T-cell (primary cell): ENCODE measurements at regions of chr14 and their contacts with region 1.

Region 1: DNA sequence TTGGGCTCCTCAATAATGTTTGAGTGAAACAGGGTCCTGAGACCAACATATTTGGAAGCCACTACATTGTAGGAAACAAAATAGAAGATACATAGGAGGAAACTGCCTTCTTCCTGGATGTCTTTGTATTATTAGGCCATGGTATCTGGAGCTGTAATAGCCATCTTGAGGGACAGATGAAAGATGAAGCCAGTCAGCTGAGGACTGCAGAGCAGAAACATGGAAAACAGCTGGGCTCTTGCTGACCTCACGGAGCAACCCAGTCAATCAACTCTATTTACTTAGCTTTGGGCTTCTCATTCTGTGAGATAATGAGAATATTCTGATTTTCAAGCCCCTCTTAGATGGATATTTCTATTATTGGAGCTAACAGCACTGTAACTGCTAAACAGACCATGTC is 962.4 kb downstream of the BCL11B start:
- DNase-seq: no peak
- ATAC-seq: no peak
- H3K4me3 ChIP-seq: no peak overlapping the region
- H3K4me3 Mint-ChIP-seq: no peak overlapping the region
- H3K27ac ChIP-seq: no peak overlapping the region
- H3K27ac Mint-ChIP-seq: no peak overlapping the region
- H3K4me1 ChIP-seq: no peaks in the 10 kb centered on the region
- H3K4me1 Mint-ChIP-seq: peaks cover 7 to 25% (median 9%) of the 10 kb centered on the region in 3 donors
- H3K27me3 ChIP-seq: no peaks in the 10 kb centered on the region
- H3K27me3 Mint-ChIP-seq: no peaks in the 10 kb centered on the region

Region 2: GRCh38 chr14:98368216-98368615 is 58.6 kb after region 1 on chr14:
- CTCF ChIA-PET with region 1: no interaction called
- POLR2A ChIA-PET with region 1: no interaction called
- DNase-seq: no peak
- ATAC-seq: no peak
- H3K4me3 ChIP-seq: no peak overlapping the region
- H3K4me3 Mint-ChIP-seq: peak overlapping the region in 1 of 3 donors; percentile 36
- H3K27ac ChIP-seq: no peak overlapping the region
- H3K27ac Mint-ChIP-seq: peak overlapping the region in 1 of 2 donors; percentile 34
- H3K4me1 ChIP-seq: peaks cover 7 to 9% of the 10 kb centered on the region in 2 experiments
- H3K4me1 Mint-ChIP-seq: peaks cover 26 to 39% (median 27%) of the 10 kb centered on the region in 3 donors
- H3K27me3 ChIP-seq: no peaks in the 10 kb centered on the region
- H3K27me3 Mint-ChIP-seq: no peaks in the 10 kb centered on the region

Region 3: DNA sequence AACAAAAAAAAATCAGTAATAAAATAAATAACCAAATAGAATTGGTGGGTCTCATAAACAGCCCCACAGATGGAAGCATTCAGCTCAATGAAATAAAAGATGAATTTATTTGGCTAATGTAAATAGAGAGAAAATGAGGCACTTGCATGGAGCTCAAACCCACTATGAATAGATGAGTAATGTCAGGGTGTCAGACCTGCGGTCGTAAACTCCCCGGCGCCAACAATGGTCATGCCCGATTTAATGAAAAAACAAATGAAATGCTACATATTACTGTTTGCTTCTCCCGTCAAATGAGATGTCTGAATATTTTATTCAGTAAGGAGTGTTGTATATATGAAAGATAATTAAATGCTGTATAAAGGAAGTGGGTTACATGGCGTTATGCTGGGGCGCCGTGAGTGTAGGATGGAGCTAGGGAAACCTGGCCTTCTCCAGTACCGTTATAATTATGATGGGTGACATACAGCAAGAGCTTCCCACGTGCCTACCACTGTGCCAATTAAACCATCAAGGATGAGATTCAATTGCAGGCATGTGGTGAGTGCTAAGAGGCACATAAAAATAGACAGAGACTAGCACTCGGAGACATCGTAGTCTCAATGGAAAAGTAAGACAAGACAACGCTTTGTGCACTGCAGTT is 314.3 kb after region 1 on chr14:
- CTCF ChIA-PET with region 1: no interaction called
- POLR2A ChIA-PET with region 1: interaction called in 1 of 2 experiments, 11 read pairs
- DNase-seq: no peak
- ATAC-seq: no peak
- H3K4me3 ChIP-seq: no peak overlapping the region
- H3K4me3 Mint-ChIP-seq: no peak overlapping the region
- H3K27ac ChIP-seq: no peak overlapping the region
- H3K27ac Mint-ChIP-seq: no peak overlapping the region
- H3K4me1 ChIP-seq: no peaks in the 10 kb centered on the region
- H3K4me1 Mint-ChIP-seq: no peaks in the 10 kb centered on the region
- H3K27me3 ChIP-seq: no peaks in the 10 kb centered on the region
- H3K27me3 Mint-ChIP-seq: no peaks in the 10 kb centered on the region